ENCODE measurements at regions of chr15 and their contacts with region 1.

Region 1: GRCh38 chr15:59632714-59633113 is 21.1 kb downstream of the GCNT3 start:
- DNase-seq: no peak
- H3K4me3 ChIP-seq: no peak overlapping the region
- H3K27ac ChIP-seq: no peak overlapping the region
- H3K4me1 ChIP-seq: no peaks in the 10 kb centered on the region
- H3K27me3 ChIP-seq: no peaks in the 10 kb centered on the region
- CTCF ChIP-seq: no peak
- POLR2A ChIP-seq: no peak

Region 2: DNA sequence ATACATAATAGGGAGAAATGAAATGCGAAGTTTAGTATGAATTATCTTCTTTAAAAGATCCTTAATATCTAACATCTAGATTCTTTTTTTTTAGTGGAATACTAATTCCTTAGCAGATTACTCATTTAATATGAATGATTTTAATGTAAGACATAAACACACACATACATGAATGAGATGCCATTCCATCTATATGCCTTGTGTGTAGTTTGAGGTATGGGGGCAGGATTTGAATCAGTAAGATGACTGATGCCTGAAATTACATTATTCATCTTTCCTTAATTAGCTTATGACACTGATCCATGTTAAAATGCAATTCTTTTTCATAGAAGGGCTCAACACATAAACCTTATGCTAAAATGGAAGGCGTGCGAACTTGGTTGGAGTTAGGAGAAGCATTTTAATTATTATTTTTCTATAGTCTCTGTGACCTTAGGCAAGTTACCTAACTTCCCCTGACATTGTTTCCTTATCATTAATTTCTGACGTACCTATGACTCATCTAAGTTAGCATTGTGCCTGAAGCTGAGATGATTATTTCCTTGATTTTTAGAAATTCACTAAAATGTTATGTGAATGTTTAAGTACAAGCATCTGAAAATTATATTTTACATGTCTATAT is 67.2 kb after region 1 on chr15:
- intact Hi-C with region 1: no loop called
- DNase-seq: no peak
- H3K4me3 ChIP-seq: no peak overlapping the region
- H3K27ac ChIP-seq: no peak overlapping the region
- H3K4me1 ChIP-seq: no peaks in the 10 kb centered on the region
- H3K27me3 ChIP-seq: no peaks in the 10 kb centered on the region
- CTCF ChIP-seq: no peak
- POLR2A ChIP-seq: no peak

Region 3: GRCh38 chr15:59904450-59905135 is 271.9 kb after region 1 on chr15:
- intact Hi-C with region 1: loop called (anchors 5 kb)
- DNase-seq: no peak
- H3K4me3 ChIP-seq: no peak overlapping the region
- H3K27ac ChIP-seq: no peak overlapping the region
- H3K4me1 ChIP-seq: no peaks in the 10 kb centered on the region
- H3K27me3 ChIP-seq: peaks cover 0 to 50% of the 10 kb centered on the region in 2 donors
- CTCF ChIP-seq: no peak
- POLR2A ChIP-seq: no peak

Measured in breast epithelium (tissue), 4 donors.